HEK293T (cell line): ENCODE measurements at regions of chr1 and their contacts with region 1.

Region 1: DNA sequence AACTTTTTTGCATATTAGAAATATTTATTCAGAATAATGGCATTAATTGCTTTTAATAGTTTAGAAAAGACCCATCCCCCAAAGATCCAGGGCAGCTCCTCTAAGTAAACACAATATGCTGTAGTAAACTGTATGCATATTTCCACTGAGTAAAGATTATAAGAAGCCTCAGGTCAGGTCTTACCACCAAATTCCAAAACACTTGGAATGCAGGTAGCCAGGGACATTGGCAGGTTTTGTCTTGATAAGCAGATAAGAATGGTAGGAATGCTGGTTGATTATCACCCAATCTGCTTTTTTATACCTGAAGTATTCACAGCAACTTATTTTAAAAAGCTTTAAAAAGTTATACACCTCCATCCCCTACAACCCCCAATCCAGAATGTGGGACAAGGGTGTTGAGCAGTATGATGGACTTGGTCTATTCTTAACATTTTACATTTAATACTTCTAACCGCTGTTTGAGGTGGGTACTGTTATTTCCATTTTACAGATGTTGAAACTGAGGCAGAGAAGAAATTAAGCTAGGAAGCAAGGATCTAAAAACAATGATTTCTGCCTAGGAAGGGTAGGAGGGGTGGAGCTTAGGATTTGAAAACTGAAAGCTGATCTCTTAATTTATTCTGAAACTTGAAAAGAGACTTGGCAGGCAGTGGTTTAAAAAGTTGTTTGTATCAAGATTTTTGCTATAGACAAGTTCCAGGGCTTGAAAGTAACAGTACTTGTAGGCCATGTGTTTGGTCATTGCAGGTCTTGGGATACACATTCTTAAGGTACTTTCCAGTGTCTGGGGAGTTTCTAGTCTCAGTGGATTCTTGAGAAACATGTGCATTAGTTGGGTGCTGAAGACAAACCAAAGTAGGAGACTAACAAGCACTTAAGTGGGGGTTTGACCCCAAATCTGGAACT is 15.6 kb upstream of the THEM4 start:
- DNase-seq: no peak

Region 2: DNA sequence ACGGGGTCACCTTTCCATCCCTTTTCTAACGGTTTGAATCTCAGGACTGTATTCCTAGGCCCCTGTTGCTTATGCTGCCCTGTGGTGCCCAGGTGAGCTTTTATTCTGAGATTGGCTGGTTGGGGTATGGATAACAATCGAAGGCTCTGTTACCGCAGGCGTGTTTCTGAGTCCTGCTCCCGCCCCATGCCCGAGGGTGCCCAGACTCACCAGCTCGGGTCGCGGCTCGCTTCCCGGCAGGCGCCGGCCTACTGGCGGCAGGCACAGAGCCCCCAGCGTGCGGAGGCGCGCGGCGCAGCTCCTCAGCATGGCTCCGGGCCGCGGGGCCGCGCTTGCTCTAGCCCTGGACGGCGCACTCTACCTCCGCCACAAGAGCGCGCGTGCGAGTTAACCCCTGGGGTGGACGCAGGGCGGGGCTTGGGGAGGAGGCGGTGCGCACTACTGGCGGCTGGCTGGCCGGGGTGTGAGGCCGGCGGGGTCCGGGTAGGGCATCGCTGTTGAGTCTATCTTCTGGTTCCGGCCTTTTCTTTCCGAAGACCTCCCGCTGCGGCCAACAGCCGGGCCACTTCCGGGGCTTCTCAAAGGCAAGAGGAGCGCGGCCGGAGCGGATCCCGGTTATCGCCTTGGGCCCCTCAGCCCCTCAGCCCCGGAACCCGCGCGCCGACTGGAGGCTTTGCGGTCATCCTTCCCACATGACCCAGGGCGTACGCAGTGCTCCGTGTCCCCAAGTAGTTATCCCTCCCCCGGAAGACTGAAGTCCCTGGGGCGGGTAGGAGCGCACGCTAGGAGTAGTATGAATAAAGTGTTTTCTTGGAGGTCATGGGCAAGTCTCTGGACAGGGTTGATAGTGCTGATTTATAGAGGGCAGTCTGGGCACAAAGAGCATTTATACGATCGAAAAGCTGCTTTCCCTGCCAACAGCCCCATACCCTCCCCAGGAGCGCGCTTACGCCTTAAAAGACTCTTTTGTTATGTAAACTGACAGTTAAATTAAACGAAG is 15.5 kb before region 1 on chr1 and contains the start of gene THEM4:
- CTCF ChIA-PET with region 1: interaction called, 3 read pairs
- POLR2A ChIA-PET with region 1: interaction called, 29 read pairs
- DNase-seq: peak; percentile 99